Dorsolateral prefrontal cortex (tissue), 120 donors: ENCODE measurements at regions of chr10 and their contacts with region 1.

Region 1: GRCh38 chr10:64558094-64558856 is 1037.1 kb downstream of the REEP3 start:
- DNase-seq: peak in 1 of 10 donors; percentile 40
- H3K4me3 ChIP-seq: peak overlapping the region in 3 of 59 donors; percentile 7 to 32 (median 25)
- H3K27ac ChIP-seq: peak overlapping the region; percentile 41 to 95 (median 86)
- H3K27me3 ChIP-seq: no peaks in the 10 kb centered on the region
- CTCF ChIP-seq: peak in 1 of 56 donors; percentile 7

Region 2: DNA sequence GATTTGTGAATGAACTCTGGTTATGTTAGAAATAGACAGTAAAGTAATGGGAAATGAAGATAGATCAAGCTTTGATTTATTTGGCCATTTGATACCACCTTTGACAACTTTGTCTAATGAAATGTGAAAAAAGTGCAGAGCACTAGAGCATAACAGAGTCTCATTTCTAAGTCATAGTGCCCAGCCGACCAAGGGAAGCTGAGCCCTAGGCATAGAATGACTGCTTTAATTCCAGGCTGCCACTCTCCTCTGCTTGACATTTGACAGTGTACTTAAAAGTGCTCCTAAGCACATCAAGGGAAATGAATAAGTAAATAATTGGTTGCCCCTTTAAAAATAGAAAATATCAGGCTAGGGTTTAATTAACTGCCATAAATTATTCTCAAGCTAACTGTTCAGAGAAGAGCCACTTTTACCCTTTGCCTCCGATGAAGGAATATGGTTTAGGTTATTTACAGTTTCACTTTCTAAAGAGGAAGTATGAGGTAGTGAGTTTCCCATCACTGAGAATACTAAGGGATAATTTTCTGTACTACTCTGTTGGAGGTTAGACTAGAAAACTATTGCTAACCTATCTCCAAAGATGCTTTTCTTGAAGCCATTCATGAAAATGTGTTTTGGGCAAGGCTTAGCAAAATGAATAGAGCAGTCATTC is 445.4 kb before region 1 on chr10:
- intact Hi-C with region 1: no loop called
- DNase-seq: no peak
- H3K4me3 ChIP-seq: peak overlapping the region in 1 of 59 donors; percentile 13
- H3K27ac ChIP-seq: no peak overlapping the region
- H3K27me3 ChIP-seq: no peaks in the 10 kb centered on the region
- CTCF ChIP-seq: no peak

Region 3: DNA sequence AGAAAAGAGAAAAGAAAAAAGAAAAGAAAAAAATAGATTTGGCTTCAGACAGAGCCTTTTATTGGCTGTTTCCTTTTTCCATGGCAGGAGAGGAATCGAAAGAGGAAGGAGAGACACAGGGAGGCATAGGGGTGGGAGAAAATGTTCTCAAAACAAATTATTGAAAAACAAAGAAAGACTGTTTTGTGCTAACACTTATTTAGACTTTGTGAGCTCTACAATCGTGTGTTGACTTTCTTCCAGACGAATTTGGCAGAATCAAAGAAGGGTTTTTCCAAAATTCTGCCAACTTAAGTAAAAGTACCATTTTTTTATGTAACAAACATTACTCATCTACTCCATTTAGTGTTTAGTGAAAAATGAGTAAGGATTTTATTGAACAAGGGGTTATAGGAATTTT is 54.8 kb before region 1 on chr10:
- intact Hi-C with region 1: no loop called
- DNase-seq: no peak
- H3K4me3 ChIP-seq: no peak overlapping the region
- H3K27ac ChIP-seq: peak overlapping the region in 38 of 59 donors; percentile 0 to 77 (median 45)
- H3K27me3 ChIP-seq: no peaks in the 10 kb centered on the region
- CTCF ChIP-seq: no peak

Region 4: DNA sequence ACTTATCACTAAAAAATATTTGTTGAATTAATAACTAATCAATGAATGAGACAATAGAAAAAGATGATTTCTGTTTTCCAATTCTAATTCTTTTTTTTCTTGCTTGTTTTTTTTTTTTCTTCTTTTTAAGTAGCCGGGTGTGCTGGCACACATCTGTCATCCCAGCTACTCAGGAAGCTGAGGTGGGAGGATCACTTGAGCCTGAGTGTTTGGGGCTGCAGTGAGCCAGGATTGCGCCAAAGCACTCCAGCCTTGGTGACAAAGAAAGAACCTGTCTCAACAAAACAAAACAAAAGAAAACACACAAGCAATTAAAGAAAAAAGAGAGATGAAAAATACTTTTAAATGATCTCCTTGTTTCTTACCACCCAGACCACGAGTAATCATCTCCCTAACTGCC is 72.3 kb after region 1 on chr10:
- intact Hi-C with region 1: loop called in 1 of 2 experiments (anchors 5 kb)
- DNase-seq: peak in 3 of 10 donors; percentile 24 to 57 (median 43)
- H3K4me3 ChIP-seq: peak overlapping the region in 3 of 59 donors; percentile 7 to 37 (median 13)
- H3K27ac ChIP-seq: peak overlapping the region in 43 of 59 donors; percentile 3 to 83 (median 52)
- H3K27me3 ChIP-seq: no peaks in the 10 kb centered on the region
- CTCF ChIP-seq: no peak